ENCODE measurements at regions of chr14 and their contacts with region 1.

Region 1: DNA sequence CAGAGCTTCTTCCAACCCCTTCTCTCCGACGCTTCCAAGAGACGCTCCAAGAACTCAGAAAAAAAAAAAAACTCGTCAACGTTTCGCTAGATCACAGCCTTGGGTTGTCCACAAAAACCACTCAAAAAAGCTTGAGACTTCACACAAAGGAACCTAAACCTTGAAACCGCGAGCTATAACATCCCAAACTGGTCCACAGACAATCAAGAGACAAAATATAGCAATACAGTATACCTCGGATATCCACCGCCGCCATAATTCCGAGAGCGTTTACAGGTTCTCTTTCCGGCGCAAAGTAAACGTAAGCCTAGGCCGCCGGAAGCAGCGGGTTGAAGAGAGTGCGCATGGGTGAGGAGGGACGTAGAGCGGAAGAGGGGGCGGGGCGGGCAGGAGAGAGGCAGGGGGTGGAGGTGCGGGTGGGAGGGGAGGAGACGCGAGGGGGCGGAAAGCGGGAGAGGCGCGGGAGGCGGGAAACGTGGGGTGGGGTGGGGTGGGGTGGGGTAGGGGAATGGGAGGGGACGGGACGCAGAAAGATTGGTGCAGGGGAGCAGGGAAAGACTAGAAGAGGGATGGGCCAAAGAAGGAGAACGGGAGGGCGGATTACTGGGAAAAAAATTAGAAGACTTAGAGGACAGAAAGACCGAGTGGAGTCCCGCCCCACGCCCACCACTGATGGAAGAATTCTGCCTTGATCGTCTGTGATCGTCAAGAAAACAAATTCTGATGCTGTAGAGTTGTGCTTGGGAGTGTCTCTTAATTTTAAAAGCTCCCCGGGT is at the start of gene MED6:
- DNase-seq: peak; percentile 78 to 94 (median 91)
- ATAC-seq: peak; percentile 100
- H3K4me3 ChIP-seq: peak within 1 kb of the TSS; percentile 96
- H3K4me3 Mint-ChIP-seq: peak within 1 kb of the TSS; percentile 97 to 100 (median 99)
- H3K27ac ChIP-seq: peak within 1 kb of the TSS; percentile 91
- H3K27ac Mint-ChIP-seq: peak within 1 kb of the TSS; percentile 96 to 99 (median 98)
- H3K4me1 ChIP-seq: peaks cover 11 to 14% of the 10 kb centered on the region in 2 donors
- H3K4me1 Mint-ChIP-seq: peaks cover 15 to 47% (median 40%) of the 10 kb centered on the region in 7 donors
- H3K27me3 ChIP-seq: no peaks in the 10 kb centered on the region
- H3K27me3 Mint-ChIP-seq: peaks cover 0 to 22% (median 6%) of the 10 kb centered on the region in 5 donors
- total RNA-seq, gene MED6: 53.4 to 97.0 (median 67.1) TPM

Region 2: GRCh38 chr14:69615496-69616407 is 984.8 kb before region 1 on chr14:
- CTCF ChIA-PET with region 1: no interaction called
- POLR2A ChIA-PET with region 1: no interaction called
- intact Hi-C with region 1: no loop called
- DNase-seq: peak in 7 of 9 donors; percentile 46 to 63 (median 59)
- ATAC-seq: peak; percentile 41
- H3K4me3 ChIP-seq: peak overlapping the region; percentile 41
- H3K4me3 Mint-ChIP-seq: peak overlapping the region; percentile 84 to 98 (median 93)
- H3K27ac ChIP-seq: peak overlapping the region; percentile 85
- H3K27ac Mint-ChIP-seq: peak overlapping the region; percentile 95 to 99 (median 98)
- H3K4me1 ChIP-seq: peaks cover 72 to 85% of the 10 kb centered on the region in 2 donors
- H3K4me1 Mint-ChIP-seq: peaks cover 72 to 91% (median 86%) of the 10 kb centered on the region in 7 donors
- H3K27me3 ChIP-seq: no peaks in the 10 kb centered on the region
- H3K27me3 Mint-ChIP-seq: no peaks in the 10 kb centered on the region

Region 3: DNA sequence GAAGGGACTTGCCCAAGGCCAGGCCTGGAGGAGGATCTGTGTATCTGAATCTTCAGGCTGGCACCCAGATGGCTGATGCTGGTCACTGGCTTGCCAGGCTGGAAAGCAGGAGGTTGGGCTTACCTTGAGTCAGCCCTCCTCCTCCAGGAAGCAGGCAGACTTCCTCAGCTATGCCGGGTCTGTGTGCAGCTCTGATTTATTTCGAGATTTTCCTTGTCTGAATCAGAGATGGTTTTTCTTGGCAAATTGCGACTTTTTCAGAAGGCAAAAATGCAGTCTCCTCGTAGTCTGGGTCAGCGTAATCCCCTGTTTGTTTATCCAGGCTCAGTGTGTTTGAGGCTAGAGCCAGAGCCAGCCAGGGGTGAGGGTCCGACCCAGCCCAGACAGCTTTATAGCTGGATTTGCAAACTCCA is 672.5 kb before region 1 on chr14:
- CTCF ChIA-PET with region 1: no interaction called
- POLR2A ChIA-PET with region 1: no interaction called
- intact Hi-C with region 1: no loop called
- DNase-seq: no peak
- ATAC-seq: no peak
- H3K4me3 ChIP-seq: no peak overlapping the region
- H3K4me3 Mint-ChIP-seq: no peak overlapping the region
- H3K27ac ChIP-seq: no peak overlapping the region
- H3K27ac Mint-ChIP-seq: no peak overlapping the region
- H3K4me1 ChIP-seq: no peaks in the 10 kb centered on the region
- H3K4me1 Mint-ChIP-seq: no peaks in the 10 kb centered on the region
- H3K27me3 ChIP-seq: no peaks in the 10 kb centered on the region
- H3K27me3 Mint-ChIP-seq: peaks cover 16 to 53% (median 41%) of the 10 kb centered on the region in 5 donors

Region 4: DNA sequence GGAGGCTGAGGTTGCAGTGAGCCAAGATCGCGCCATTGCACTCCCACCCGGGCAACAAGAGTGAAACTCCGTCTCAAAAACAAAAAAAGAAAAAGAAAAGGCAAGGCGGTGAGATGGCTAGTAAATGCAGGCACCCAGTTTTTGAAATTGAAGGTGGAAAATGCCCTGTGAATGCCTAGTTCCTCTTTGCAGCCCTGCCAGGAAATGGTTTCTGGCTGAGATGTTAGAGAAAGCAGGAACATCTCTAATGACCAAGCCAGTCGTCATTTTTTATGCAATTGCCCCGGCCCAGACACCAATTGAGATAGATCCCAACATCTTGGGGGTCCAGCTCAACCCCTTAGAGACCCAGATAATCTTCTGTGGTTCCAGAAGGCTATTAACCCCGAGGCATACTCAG is 428.8 kb before region 1 on chr14:
- CTCF ChIA-PET with region 1: no interaction called
- POLR2A ChIA-PET with region 1: no interaction called
- intact Hi-C with region 1: no loop called
- DNase-seq: no peak
- ATAC-seq: no peak
- H3K4me3 ChIP-seq: no peak overlapping the region
- H3K4me3 Mint-ChIP-seq: no peak overlapping the region
- H3K27ac ChIP-seq: no peak overlapping the region
- H3K27ac Mint-ChIP-seq: no peak overlapping the region
- H3K4me1 ChIP-seq: no peaks in the 10 kb centered on the region
- H3K4me1 Mint-ChIP-seq: peaks cover 0 to 3% (median 0%) of the 10 kb centered on the region in 7 donors
- H3K27me3 ChIP-seq: no peaks in the 10 kb centered on the region
- H3K27me3 Mint-ChIP-seq: peaks cover 10 to 43% (median 24%) of the 10 kb centered on the region in 5 donors

Region 5: GRCh38 chr14:70398706-70399431 is 201.7 kb before region 1 on chr14:
- CTCF ChIA-PET with region 1: no interaction called
- POLR2A ChIA-PET with region 1: no interaction called
- intact Hi-C with region 1: no loop called
- DNase-seq: no peak
- ATAC-seq: no peak
- H3K4me3 ChIP-seq: no peak overlapping the region
- H3K4me3 Mint-ChIP-seq: no peak overlapping the region
- H3K27ac ChIP-seq: no peak overlapping the region
- H3K27ac Mint-ChIP-seq: no peak overlapping the region
- H3K4me1 ChIP-seq: no peaks in the 10 kb centered on the region
- H3K4me1 Mint-ChIP-seq: peaks cover 0 to 36% (median 25%) of the 10 kb centered on the region in 7 donors
- H3K27me3 ChIP-seq: no peaks in the 10 kb centered on the region
- H3K27me3 Mint-ChIP-seq: no peaks in the 10 kb centered on the region

Region 6: GRCh38 chr14:70655110-70655826 is 54.7 kb after region 1 on chr14:
- CTCF ChIA-PET with region 1: no interaction called
- POLR2A ChIA-PET with region 1: interaction called, 5 read pairs
- intact Hi-C with region 1: loop called (anchors 1 kb)
- DNase-seq: peak; percentile 29 to 93 (median 91)
- ATAC-seq: peak; percentile 95
- H3K4me3 ChIP-seq: peak overlapping the region; percentile 43
- H3K4me3 Mint-ChIP-seq: peak overlapping the region; percentile 76 to 89 (median 85)
- H3K27ac ChIP-seq: peak overlapping the region; percentile 84
- H3K27ac Mint-ChIP-seq: peak overlapping the region; percentile 94 to 99 (median 98)
- H3K4me1 ChIP-seq: peaks cover 60 to 83% of the 10 kb centered on the region in 2 donors
- H3K4me1 Mint-ChIP-seq: peaks cover 66 to 98% (median 94%) of the 10 kb centered on the region in 7 donors
- H3K27me3 ChIP-seq: no peaks in the 10 kb centered on the region
- H3K27me3 Mint-ChIP-seq: no peaks in the 10 kb centered on the region

Region 7: GRCh38 chr14:70714055-70714621 is 113.6 kb after region 1 on chr14:
- CTCF ChIA-PET with region 1: interaction called, 5 read pairs
- POLR2A ChIA-PET with region 1: no interaction called
- intact Hi-C with region 1: loop called in 1 of 2 experiments (anchors 1 kb)
- DNase-seq: peak in 7 of 9 donors; percentile 24 to 62 (median 43)
- ATAC-seq: no peak
- H3K4me3 ChIP-seq: no peak overlapping the region
- H3K4me3 Mint-ChIP-seq: peak overlapping the region in 2 of 10 donors; percentile 38 to 53
- H3K27ac ChIP-seq: no peak overlapping the region
- H3K27ac Mint-ChIP-seq: no peak overlapping the region
- H3K4me1 ChIP-seq: peaks cover 2 to 4% of the 10 kb centered on the region in 2 donors
- H3K4me1 Mint-ChIP-seq: peaks cover 3 to 7% (median 5%) of the 10 kb centered on the region in 7 donors
- H3K27me3 ChIP-seq: no peaks in the 10 kb centered on the region
- H3K27me3 Mint-ChIP-seq: peaks cover 0 to 9% (median 4%) of the 10 kb centered on the region in 5 donors

Region 8: DNA sequence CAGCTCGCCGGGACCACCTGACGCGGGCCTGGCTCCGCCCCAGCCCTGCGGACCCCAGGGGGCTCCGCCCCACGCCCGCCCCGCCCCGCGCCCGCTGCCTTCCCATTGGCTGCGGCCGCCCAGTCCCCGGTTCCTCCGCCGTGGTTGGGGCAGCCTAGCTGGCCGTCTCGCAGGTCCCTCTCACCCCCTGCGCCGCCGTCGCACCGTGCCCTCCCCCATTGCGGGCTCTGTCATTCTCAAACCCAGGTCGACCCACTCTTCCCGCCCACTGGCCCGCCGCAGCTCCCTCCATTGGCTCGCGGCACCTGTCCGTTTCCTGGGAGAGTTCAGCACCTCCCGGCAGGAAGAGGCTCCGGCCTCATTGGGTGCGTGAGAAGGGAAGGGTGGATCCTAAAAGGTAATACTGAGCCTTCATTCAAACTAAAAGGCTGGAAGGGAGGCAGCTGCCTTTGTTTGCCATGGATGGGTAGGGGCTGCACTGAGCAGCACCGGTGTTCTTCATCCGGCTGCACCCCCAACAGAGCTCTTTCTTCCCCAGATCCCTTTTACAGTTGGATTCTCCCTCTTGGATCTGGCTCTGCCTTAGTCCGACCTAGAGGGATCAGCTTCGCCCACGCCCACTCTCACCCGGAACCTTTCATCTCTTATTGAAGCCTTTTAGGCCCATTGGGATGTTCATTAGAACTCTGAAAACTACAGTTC is 209.1 kb after region 1 on chr14:
- CTCF ChIA-PET with region 1: no interaction called
- POLR2A ChIA-PET with region 1: interaction called, 3 read pairs
- intact Hi-C with region 1: loop called (anchors 1 kb)
- DNase-seq: peak; percentile 68 to 87 (median 78)
- ATAC-seq: peak; percentile 90
- H3K4me3 ChIP-seq: peak overlapping the region; percentile 73
- H3K4me3 Mint-ChIP-seq: peak overlapping the region in 1 of 10 donors; percentile 87
- H3K27ac ChIP-seq: peak overlapping the region; percentile 65
- H3K27ac Mint-ChIP-seq: peak overlapping the region in 6 of 9 donors; percentile 79 to 92 (median 88)
- H3K4me1 ChIP-seq: peaks cover 3 to 10% of the 10 kb centered on the region in 2 donors
- H3K4me1 Mint-ChIP-seq: peaks cover 9 to 17% (median 13%) of the 10 kb centered on the region in 7 donors
- H3K27me3 ChIP-seq: no peaks in the 10 kb centered on the region
- H3K27me3 Mint-ChIP-seq: peaks cover 0 to 9% (median 4%) of the 10 kb centered on the region in 5 donors